Transverse colon (tissue), 4 donors: ENCODE measurements at regions of chr17 and their contacts with region 1.

Region 1: GRCh38 chr17:29148790-29149430 is 31.3 kb downstream of the MYO18A start:
- DNase-seq: peak; percentile 96
- H3K4me3 ChIP-seq: peak overlapping the region; percentile 32 to 57 (median 42)
- H3K27ac ChIP-seq: peak overlapping the region; percentile 78 to 89 (median 82)
- H3K4me1 ChIP-seq: peaks cover 14 to 32% (median 23%) of the 10 kb centered on the region in 4 donors
- H3K27me3 ChIP-seq: no peaks in the 10 kb centered on the region
- CTCF ChIP-seq: peak; percentile 92 to 98 (median 96)
- EP300 ChIP-seq: no peak
- POLR2A ChIP-seq: peak; percentile 25

Region 2: GRCh38 chr17:29102060-29102459 is 46.9 kb before region 1 on chr17:
- in situ Hi-C with region 1: no loop called
- intact Hi-C with region 1: no loop called
- DNase-seq: no peak
- H3K4me3 ChIP-seq: no peak overlapping the region
- H3K27ac ChIP-seq: no peak overlapping the region
- H3K4me1 ChIP-seq: no peaks in the 10 kb centered on the region
- H3K27me3 ChIP-seq: no peaks in the 10 kb centered on the region
- CTCF ChIP-seq: no peak
- EP300 ChIP-seq: no peak
- POLR2A ChIP-seq: no peak

Region 3: DNA sequence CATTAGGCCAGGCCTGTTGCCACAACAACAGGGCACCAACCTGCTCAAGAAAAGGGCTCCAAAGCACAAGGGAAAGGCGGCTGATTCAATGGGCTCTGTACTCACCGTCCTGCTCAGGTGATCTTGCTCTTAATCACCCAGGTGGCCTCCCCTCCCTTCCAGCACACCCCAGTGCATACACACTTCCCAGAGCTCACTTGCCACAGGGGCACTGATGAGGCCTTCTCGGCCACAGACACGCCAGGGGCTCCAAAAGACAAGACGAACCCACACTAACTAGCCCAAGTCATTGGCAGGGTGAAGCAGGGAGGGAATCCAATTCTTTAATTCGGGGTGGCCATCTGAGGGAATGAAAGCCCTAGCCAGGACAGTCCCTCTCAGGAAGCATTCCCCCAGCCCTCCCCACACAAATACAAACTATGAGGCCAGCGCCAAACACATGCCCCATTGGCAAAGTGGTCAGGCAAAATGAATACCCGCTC is 29.9 kb after region 1 on chr17:
- in situ Hi-C with region 1: no loop called
- intact Hi-C with region 1: loop called (anchors 1 kb)
- DNase-seq: peak; percentile 62
- H3K4me3 ChIP-seq: peak overlapping the region in 2 of 4 donors; percentile 59 to 67
- H3K27ac ChIP-seq: peak overlapping the region; percentile 89 to 94 (median 92)
- H3K4me1 ChIP-seq: peaks cover 32 to 59% (median 50%) of the 10 kb centered on the region in 4 donors
- H3K27me3 ChIP-seq: no peaks in the 10 kb centered on the region
- CTCF ChIP-seq: no peak
- EP300 ChIP-seq: no peak
- POLR2A ChIP-seq: no peak

Region 4: DNA sequence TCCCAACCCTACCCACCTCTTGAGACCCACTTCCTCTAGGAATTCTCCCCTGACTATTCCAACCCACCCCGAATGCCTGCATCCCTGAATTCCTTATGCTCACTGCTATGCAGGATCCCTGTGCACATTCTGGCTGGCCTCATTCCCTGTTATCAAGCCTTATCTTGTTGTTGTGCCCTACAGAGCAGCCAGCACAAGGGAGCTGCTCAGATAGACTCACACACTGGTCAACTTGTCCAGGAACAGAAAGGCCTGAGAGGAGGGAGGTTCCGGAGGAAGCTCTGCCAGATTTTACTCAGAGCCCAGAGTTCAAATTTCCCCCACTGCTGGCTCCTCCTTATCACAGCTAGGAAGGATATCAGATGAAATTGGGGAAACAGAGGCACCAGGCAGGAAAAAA is 56.1 kb after region 1 on chr17:
- in situ Hi-C with region 1: loop called in 2 of 4 experiments (anchors 10 kb)
- intact Hi-C with region 1: no loop called
- DNase-seq: no peak
- H3K4me3 ChIP-seq: no peak overlapping the region
- H3K27ac ChIP-seq: no peak overlapping the region
- H3K4me1 ChIP-seq: no peaks in the 10 kb centered on the region
- H3K27me3 ChIP-seq: no peaks in the 10 kb centered on the region
- CTCF ChIP-seq: no peak
- EP300 ChIP-seq: no peak
- POLR2A ChIP-seq: no peak

Region 5: DNA sequence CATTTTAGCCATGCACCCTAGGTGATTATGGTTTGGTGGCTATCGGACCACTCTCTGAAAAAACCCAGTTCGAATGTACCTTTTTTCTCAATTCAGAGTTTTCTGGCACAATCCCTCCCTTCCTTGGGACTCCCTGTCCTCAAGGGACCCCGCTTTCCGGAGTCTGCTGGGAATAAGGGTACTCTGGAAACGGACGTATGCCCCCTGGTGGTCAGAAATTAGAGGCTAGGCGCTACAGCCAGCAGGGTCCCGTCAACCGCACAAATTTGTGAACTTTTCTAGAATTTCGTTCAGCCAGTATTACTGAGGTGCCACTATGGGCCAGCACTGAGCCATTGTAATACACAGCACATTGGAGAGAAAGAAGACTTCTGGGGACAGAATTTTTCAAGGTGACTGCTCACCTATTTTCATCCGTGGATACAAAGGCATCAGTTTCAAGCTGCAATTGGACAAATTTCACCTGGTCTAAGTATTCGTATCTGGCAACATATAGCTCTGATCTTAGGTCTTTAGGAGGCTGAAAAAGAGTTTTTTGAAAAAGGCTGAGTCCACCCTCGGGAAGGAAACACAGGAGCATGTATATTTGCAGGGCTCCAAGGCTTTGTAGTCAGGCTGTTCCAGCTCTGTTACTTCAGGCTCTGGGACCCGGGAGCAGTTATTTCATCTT is 70.6 kb after region 1 on chr17:
- in situ Hi-C with region 1: loop called in 1 of 4 experiments (anchors 10 kb)
- intact Hi-C with region 1: loop called (anchors 2 kb)
- DNase-seq: peak; percentile 77
- H3K4me3 ChIP-seq: no peak overlapping the region
- H3K27ac ChIP-seq: no peak overlapping the region
- H3K4me1 ChIP-seq: peaks cover 0 to 10% (median 8%) of the 10 kb centered on the region in 4 donors
- H3K27me3 ChIP-seq: no peaks in the 10 kb centered on the region
- CTCF ChIP-seq: peak; percentile 90 to 95 (median 95)
- EP300 ChIP-seq: no peak
- POLR2A ChIP-seq: no peak

Region 6: GRCh38 chr17:29293890-29294579 is 145.1 kb after region 1 on chr17 and contains the start of gene NUFIP2:
- in situ Hi-C with region 1: loop called in 1 of 4 experiments (anchors 25 kb)
- intact Hi-C with region 1: loop called (anchors 5 kb)
- DNase-seq: peak; percentile 100
- H3K4me3 ChIP-seq: peak within 1 kb of the TSS; percentile 74 to 97 (median 90)
- H3K27ac ChIP-seq: peak within 1 kb of the TSS; percentile 98 to 100 (median 99)
- H3K4me1 ChIP-seq: peaks cover 16 to 37% (median 31%) of the 10 kb centered on the region in 4 donors
- H3K27me3 ChIP-seq: no peaks in the 10 kb centered on the region
- CTCF ChIP-seq: peak in 1 of 5 experiments; percentile 5
- EP300 ChIP-seq: no peak
- POLR2A ChIP-seq: peak; percentile 100
- total RNA-seq, gene NUFIP2: 19.8 to 40.8 (median 25.4) TPM